Activated naive CD8-positive, alpha-beta T cell treated with anti-CD3 and anti-CD28 coated beads, Interleukin-2, amount 10 ng/mL, durations not matched to agents 7 days and 5 days (primary cell): ENCODE measurements at regions of chr12 and their contacts with region 1.

Region 1: GRCh38 chr12:47742253-47742825 is 16.3 kb downstream of the RAPGEF3 start:
- DNase-seq: peak; percentile 84
- ATAC-seq: peak; percentile 23
- H3K4me3 Mint-ChIP-seq: no peak overlapping the region
- H3K27ac Mint-ChIP-seq: no peak overlapping the region
- H3K4me1 Mint-ChIP-seq: peaks cover 16% of the 10 kb centered on the region
- H3K27me3 Mint-ChIP-seq: peaks cover 14% of the 10 kb centered on the region

Region 2: DNA sequence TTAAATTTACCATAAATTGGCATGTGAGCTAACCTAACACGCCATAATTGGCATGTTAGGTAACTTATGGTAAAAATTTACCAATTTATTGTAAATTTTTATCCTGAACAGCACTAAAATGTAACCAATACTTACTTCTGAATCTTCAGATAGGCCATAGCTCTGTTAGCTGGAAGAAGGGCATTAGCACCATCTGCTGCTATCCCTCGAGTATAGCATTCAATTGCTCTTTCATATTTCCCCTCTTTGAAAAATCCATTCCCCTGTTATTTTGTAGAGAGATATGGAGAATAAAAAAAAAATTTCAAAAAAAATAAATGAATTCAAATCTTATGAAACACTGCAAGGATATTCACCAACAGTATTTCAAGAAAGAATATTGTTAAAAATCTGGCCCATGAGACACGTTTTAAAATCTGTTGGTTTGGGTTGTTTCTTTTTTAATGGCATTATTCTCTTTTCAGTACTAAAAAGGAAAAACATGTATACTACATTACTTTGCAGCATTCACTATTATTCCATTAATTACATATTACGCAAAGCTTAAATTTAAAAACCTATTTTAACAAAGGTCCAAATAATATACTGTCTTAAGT is 55.6 kb before region 1 on chr12:
- POLR2A ChIA-PET with region 1: no interaction called
- DNase-seq: no peak
- ATAC-seq: peak; percentile 70
- H3K4me3 Mint-ChIP-seq: no peak overlapping the region
- H3K27ac Mint-ChIP-seq: no peak overlapping the region
- H3K4me1 Mint-ChIP-seq: peaks cover 4% of the 10 kb centered on the region
- H3K27me3 Mint-ChIP-seq: no peaks in the 10 kb centered on the region

Region 3: DNA sequence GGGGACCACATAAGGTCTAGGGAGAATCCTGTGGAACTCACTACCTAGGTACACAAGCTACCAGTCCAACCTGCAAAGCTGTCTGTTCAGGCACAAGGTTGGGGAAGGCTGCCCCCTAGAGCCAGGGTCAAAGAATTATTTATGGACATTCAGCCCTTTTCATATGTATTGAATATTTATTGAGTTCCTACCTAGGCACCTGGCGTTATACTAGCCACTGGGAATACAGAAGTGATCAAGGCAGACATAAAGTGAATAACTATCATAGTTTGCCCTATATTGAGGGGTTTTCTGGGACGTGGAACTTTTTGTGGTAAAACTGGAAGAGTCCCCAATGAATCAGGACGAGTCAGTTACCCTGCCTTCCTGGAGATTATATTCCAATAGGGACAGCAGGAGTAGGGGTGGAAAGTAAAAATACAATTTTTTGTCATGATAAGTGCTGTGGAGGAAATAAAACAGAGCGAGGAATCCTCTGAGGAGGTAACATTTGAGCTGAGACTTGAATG is 24.9 kb after region 1 on chr12:
- POLR2A ChIA-PET with region 1: interaction called, 37 read pairs
- DNase-seq: peak; percentile 78
- ATAC-seq: peak; percentile 71
- H3K4me3 Mint-ChIP-seq: peak overlapping the region; percentile 65
- H3K27ac Mint-ChIP-seq: no peak overlapping the region
- H3K4me1 Mint-ChIP-seq: peaks cover 27% of the 10 kb centered on the region
- H3K27me3 Mint-ChIP-seq: peaks cover 10% of the 10 kb centered on the region

Region 4: DNA sequence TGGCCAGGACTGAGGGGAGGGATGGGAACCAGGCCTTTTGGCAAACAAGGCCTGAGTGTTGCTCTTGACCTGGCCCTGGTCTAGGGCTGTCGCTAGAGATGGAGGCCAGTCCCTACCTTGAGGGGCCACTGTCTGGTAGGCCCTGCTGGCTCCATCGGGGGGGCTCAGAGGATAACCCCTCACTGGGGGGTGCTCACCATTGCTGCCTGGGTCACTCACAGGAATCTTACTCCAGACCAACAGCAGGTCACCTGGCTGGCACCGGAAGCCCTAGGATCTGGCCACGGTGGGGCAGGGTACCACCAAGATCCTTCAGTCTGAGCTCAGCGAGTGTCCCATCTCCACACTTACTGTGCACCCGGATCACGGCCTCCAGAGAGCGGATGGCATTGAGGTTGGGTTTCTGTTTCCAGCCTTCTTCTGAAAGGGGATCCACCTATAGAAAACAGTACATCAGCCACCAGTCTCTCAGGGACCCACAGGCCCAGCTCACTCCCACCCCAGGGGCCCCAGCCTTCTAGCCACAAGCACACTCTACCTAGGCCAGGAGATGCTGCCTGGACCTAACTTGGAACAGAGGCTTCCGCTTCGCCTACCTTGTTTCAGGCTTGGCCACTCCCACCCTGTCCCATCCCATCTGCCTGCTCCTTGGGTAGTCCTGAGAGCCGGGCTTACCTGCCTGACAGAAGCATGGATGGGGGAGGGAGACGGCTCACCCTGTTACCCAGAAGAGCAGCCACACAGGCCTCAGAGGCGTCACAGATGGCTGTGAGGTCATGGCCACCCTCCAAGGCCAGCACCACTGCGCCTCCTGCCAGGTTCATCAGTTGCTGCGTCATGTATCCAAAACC is 42.9 kb after region 1 on chr12:
- POLR2A ChIA-PET with region 1: no interaction called
- DNase-seq: no peak
- ATAC-seq: no peak
- H3K4me3 Mint-ChIP-seq: no peak overlapping the region
- H3K27ac Mint-ChIP-seq: no peak overlapping the region
- H3K4me1 Mint-ChIP-seq: peaks cover 2% of the 10 kb centered on the region
- H3K27me3 Mint-ChIP-seq: no peaks in the 10 kb centered on the region

Region 5: DNA sequence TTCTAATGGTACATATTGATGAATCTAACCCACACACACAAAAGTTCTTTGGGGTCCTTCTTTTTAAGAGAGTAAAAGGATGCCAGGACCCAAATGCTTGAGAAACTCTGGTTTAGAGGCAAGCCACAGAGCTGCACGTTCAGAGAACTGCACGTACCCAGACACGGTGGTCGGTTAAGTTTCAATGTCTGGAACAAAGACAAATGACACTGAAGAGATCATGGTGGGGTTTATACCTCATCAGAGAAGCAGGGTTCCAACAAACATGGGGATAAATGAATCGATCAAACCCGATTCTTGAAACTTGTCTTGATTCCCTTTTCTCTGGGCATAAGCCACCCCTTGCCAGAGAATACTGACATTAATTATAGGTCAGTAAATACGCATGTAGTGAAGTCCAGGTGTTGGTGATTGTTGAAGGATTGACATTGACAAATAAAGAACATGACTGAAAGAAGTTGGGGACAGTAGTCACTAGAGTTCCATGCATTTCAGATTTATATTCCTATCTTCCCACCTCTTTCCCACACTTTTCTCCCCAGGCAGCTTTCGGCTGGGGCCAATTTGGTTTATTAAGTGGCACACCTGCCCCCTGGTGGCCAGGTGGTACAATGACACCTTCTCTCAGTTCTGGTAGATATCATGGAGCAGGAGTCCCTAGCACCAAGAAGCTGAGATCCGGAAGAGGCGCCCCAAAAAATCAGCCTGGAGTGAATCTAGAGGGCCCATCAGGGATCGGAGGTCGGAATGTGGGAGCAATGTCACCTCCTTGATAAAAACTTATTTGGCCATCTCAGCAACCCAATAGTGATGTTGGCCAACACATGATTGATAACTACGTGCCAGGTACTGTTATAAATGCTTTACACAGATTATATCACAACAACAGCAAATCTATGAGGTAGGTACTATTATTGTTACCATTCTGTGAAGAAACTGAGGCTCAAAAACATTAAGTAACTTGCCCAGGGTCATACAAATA is 95.1 kb after region 1 on chr12:
- POLR2A ChIA-PET with region 1: interaction called, 24 read pairs
- DNase-seq: peak; percentile 74
- ATAC-seq: no peak
- H3K4me3 Mint-ChIP-seq: peak overlapping the region; percentile 35
- H3K27ac Mint-ChIP-seq: peak overlapping the region; percentile 62
- H3K4me1 Mint-ChIP-seq: peaks cover 53% of the 10 kb centered on the region
- H3K27me3 Mint-ChIP-seq: no peaks in the 10 kb centered on the region